Calu3 (cell line): ENCODE measurements at regions of chr3 and their contacts with region 1.

Region 1: DNA sequence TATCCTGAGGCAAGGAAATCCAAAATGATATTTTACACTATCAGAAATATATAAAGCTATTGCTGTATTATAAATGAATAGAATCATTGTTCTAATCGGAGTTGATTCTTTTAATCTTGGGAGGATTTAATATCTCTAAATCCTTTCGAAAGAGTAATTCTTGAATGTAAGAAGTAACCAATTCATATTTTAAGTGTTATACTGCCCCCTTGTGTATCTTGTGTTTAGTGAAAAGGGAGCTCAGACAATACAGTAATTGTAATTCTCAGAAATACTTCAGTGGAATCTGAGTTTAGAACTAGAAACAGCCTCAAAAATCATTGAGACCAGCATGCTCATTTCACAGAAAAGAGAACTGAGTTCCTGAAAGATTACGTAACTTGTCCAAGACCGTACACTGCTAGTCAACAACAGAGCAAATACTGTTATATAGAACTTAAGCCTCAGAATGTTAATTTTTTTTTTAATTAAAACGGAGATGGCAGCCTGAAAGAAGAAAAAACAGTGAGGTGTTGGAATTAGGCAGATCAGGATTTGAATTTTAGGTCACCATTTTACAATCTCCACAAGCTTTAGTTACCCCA is 42.9 kb downstream of the PLCH1 start:
- DNase-seq: no peak
- H3K4me3 Mint-ChIP-seq: no peak overlapping the region
- H3K27ac Mint-ChIP-seq: no peak overlapping the region
- H3K4me1 Mint-ChIP-seq: peaks cover 27% of the 10 kb centered on the region
- H3K27me3 Mint-ChIP-seq: no peaks in the 10 kb centered on the region
- CTCF ChIP-seq: peak; percentile 54

Region 2: DNA sequence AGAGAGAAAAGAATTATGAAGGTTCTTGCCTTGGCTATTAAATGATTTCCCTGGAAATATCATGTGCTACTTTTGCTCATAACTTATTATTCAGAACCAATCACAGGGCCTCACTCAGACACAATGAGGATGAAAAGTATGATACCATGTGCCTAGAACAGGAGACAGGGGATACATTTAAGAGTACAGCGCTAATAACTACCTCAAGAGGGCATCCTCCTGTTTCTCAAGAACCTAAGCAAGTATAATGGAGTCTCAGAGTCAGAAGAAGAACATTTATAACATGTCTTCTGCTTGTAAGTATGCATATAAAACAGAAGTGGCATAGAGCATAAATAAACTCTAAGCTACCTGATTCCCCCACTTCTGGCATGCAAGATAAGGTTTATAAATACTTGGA is 747.2 kb before region 1 on chr3:
- CTCF ChIA-PET with region 1: no interaction called
- intact Hi-C with region 1: loop called (anchors 10 kb)
- DNase-seq: no peak
- H3K4me3 Mint-ChIP-seq: no peak overlapping the region
- H3K27ac Mint-ChIP-seq: no peak overlapping the region
- H3K4me1 Mint-ChIP-seq: peaks cover 13% of the 10 kb centered on the region
- H3K27me3 Mint-ChIP-seq: no peaks in the 10 kb centered on the region
- CTCF ChIP-seq: peak; percentile 37

Region 3: GRCh38 chr3:155382396-155383042 is 319.5 kb before region 1 on chr3:
- CTCF ChIA-PET with region 1: interaction called, 82 read pairs
- intact Hi-C with region 1: loop called (anchors 1 kb)
- DNase-seq: peak; percentile 89
- H3K4me3 Mint-ChIP-seq: no peak overlapping the region
- H3K27ac Mint-ChIP-seq: no peak overlapping the region
- H3K4me1 Mint-ChIP-seq: no peaks in the 10 kb centered on the region
- H3K27me3 Mint-ChIP-seq: no peaks in the 10 kb centered on the region
- CTCF ChIP-seq: peak; percentile 93

Region 4: DNA sequence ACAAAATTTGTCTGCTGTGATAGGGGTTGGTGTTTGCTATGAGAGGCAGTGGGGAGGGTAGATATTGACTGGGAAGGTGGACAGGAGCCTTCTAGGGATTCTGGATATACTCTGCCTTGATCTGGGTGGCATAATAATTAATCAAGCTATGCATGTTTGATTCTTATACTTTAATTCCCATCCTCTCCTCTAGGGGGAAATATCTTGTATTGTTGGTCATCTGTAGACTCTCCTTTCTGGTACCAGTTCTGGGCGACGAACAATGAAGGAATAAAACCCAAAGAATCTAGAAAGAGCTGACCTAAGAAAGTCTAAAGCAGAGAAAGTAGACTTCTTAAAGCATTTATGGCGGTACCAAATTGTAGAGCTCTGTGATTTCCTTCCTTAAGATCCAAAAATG is 210.3 kb before region 1 on chr3:
- CTCF ChIA-PET with region 1: interaction called, 10 read pairs
- intact Hi-C with region 1: no loop called
- DNase-seq: no peak
- H3K4me3 Mint-ChIP-seq: no peak overlapping the region
- H3K27ac Mint-ChIP-seq: no peak overlapping the region
- H3K4me1 Mint-ChIP-seq: no peaks in the 10 kb centered on the region
- H3K27me3 Mint-ChIP-seq: no peaks in the 10 kb centered on the region
- CTCF ChIP-seq: peak; percentile 33

Region 5: DNA sequence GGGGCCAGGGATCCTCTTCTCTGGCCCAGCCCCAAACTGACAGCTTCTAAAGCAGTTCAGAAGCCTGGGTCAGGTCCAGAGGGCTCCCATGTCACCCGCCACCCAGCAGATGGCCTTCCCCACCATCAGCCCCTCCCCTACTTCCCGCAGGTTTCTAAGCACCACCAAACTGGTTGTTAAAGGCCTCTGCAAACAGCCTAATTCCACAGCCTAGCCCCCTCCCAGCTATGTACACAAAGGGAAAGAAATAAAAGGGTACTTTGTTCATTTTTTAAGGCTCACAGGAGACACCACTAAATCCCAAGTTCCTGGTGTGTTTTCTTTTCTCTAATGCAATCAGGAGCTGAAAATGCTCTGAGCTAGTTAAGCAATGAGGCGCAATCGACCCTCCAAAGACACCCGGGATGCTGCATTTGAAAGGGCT is 12.3 kb after region 1 on chr3:
- CTCF ChIA-PET with region 1: interaction called, 12 read pairs
- intact Hi-C with region 1: no loop called
- DNase-seq: peak; percentile 36
- H3K4me3 Mint-ChIP-seq: no peak overlapping the region
- H3K27ac Mint-ChIP-seq: no peak overlapping the region
- H3K4me1 Mint-ChIP-seq: peaks cover 9% of the 10 kb centered on the region
- H3K27me3 Mint-ChIP-seq: no peaks in the 10 kb centered on the region
- CTCF ChIP-seq: no peak

Region 6: GRCh38 chr3:156260331-156260730 is 558.4 kb after region 1 on chr3:
- CTCF ChIA-PET with region 1: no interaction called
- intact Hi-C with region 1: no loop called
- DNase-seq: no peak
- H3K4me3 Mint-ChIP-seq: no peak overlapping the region
- H3K27ac Mint-ChIP-seq: no peak overlapping the region
- H3K4me1 Mint-ChIP-seq: no peaks in the 10 kb centered on the region
- H3K27me3 Mint-ChIP-seq: peaks cover 45% of the 10 kb centered on the region
- CTCF ChIP-seq: no peak